ENCODE measurements at regions of chr6 and their contacts with region 1.

Region 1: DNA sequence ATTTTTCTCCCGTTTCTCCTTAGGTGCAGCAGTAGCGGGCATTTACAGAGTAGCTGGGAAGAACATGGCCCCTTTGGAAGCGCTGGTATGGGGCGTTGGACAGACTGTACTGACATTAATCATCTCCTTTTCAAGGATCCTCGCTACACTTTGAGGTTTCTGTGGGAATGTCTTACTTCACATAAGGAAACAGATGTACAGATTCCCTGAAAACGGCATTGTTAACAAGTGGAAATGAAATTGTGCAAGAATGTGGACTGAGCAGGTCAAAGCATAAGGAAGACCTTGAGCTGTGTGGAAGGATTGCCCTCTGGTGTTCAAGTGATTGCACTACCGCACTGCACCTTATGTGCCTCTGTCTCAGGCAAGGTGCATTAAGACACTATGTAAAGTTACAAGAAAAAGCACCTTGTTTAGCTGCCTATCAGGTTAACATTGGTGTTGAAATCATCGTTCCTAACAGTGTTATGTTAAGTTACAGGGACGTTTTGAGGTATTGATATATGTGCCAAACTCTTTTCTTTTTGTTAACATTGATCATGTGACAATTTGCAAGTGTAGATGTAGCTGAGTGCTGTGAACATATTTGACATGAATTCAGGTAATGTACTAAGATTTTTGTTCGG is 38.0 kb downstream of the TMEM170B start:
- H3K4me3 ChIP-seq: no peak overlapping the region
- H3K27ac ChIP-seq: no peak overlapping the region
- H3K4me1 ChIP-seq: no peaks in the 10 kb centered on the region
- CTCF ChIP-seq: peak; percentile 75

Region 2: DNA sequence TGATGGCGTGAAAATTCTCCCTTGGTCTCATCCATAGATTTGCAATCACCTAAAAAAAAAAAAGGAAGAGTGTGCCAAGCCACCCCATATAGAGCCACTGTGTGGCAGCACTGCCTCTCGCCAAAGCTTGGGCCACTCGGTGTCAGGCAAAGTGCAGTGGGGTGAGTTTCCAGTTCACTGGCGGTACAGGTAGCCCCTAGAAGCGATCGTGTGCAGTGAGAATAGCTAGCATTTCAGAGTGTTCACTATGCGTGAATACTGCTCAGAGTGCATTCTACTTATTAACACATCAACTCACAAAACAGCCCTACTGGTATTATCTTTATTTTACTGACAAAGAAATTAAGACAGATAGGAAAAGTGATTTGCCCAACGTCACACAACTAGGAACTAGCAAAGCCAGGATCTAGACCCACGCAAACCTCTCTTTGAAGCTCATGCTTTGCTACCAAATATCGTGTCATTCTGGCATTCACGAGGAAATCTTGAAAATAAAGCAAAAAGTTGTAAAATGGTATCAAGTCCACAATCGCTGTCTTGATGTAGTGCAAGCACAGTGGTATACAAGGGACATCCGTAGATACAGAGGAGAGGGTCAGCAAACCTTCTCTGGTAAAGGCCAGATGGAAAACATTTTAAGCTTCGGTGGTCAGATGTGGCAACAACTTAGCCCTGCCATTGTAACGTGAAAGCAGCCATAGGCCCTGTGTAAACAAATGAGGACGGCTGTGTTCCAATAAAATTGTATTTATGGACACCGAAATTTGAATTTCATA is 1064.7 kb before region 1 on chr6:
- CTCF ChIA-PET with region 1: interaction called, 15 read pairs
- POLR2A ChIA-PET with region 1: no interaction called
- H3K4me3 ChIP-seq: no peak overlapping the region
- H3K27ac ChIP-seq: no peak overlapping the region
- H3K4me1 ChIP-seq: peaks cover 6% of the 10 kb centered on the region; the same call in 1 of the 2 replicates
- CTCF ChIP-seq: peak; percentile 88

Region 3: GRCh38 chr6:11144393-11144851 is 431.1 kb before region 1 on chr6:
- CTCF ChIA-PET with region 1: interaction called, 11 read pairs
- POLR2A ChIA-PET with region 1: no interaction called
- H3K4me3 ChIP-seq: no peak overlapping the region
- H3K27ac ChIP-seq: no peak overlapping the region
- H3K4me1 ChIP-seq: no peaks in the 10 kb centered on the region
- CTCF ChIP-seq: peak; percentile 67; the same call in 1 of the 2 replicates

Region 4: GRCh38 chr6:11172501-11173332 is 402.8 kb before region 1 on chr6:
- CTCF ChIA-PET with region 1: interaction called, 13 read pairs
- POLR2A ChIA-PET with region 1: no interaction called
- H3K4me3 ChIP-seq: peak overlapping the region; percentile 21
- H3K27ac ChIP-seq: no peak overlapping the region
- H3K4me1 ChIP-seq: peaks cover 5% of the 10 kb centered on the region; the same call in 1 of the 2 replicates
- CTCF ChIP-seq: peak; percentile 63

Region 5: GRCh38 chr6:11543919-11544518 is 31.5 kb before region 1 on chr6:
- CTCF ChIA-PET with region 1: interaction called, 11 read pairs
- POLR2A ChIA-PET with region 1: interaction called, 7 read pairs
- H3K4me3 ChIP-seq: no peak overlapping the region
- H3K27ac ChIP-seq: no peak overlapping the region
- H3K4me1 ChIP-seq: 0 out of 2 replicates have a peak, but pooled peaks cover 2% of the 10 kb centered on the region
- CTCF ChIP-seq: no peak

Region 6: GRCh38 chr6:11563793-11564192 is 11.7 kb before region 1 on chr6:
- CTCF ChIA-PET with region 1: interaction called, 38 read pairs
- POLR2A ChIA-PET with region 1: no interaction called
- H3K4me3 ChIP-seq: no peak overlapping the region
- H3K27ac ChIP-seq: no peak overlapping the region
- H3K4me1 ChIP-seq: no peaks in the 10 kb centered on the region
- CTCF ChIP-seq: no peak

Region 7: GRCh38 chr6:11585426-11586016 is 10.0 kb after region 1 on chr6:
- CTCF ChIA-PET with region 1: interaction called, 21 read pairs
- POLR2A ChIA-PET with region 1: no interaction called
- H3K4me3 ChIP-seq: no peak overlapping the region
- H3K27ac ChIP-seq: no peak overlapping the region
- H3K4me1 ChIP-seq: no peaks in the 10 kb centered on the region
- CTCF ChIP-seq: peak; percentile 53; the same call in 1 of the 2 replicates

Region 8: GRCh38 chr6:11685152-11686093 is 109.9 kb after region 1 on chr6:
- CTCF ChIA-PET with region 1: no interaction called
- POLR2A ChIA-PET with region 1: no interaction called
- H3K4me3 ChIP-seq: no peak overlapping the region
- H3K27ac ChIP-seq: no peak overlapping the region
- H3K4me1 ChIP-seq: peaks cover 5% of the 10 kb centered on the region
- CTCF ChIP-seq: no peak